H1 (cell line): ENCODE measurements at regions of chr16 and their contacts with region 1.

Region 1: DNA sequence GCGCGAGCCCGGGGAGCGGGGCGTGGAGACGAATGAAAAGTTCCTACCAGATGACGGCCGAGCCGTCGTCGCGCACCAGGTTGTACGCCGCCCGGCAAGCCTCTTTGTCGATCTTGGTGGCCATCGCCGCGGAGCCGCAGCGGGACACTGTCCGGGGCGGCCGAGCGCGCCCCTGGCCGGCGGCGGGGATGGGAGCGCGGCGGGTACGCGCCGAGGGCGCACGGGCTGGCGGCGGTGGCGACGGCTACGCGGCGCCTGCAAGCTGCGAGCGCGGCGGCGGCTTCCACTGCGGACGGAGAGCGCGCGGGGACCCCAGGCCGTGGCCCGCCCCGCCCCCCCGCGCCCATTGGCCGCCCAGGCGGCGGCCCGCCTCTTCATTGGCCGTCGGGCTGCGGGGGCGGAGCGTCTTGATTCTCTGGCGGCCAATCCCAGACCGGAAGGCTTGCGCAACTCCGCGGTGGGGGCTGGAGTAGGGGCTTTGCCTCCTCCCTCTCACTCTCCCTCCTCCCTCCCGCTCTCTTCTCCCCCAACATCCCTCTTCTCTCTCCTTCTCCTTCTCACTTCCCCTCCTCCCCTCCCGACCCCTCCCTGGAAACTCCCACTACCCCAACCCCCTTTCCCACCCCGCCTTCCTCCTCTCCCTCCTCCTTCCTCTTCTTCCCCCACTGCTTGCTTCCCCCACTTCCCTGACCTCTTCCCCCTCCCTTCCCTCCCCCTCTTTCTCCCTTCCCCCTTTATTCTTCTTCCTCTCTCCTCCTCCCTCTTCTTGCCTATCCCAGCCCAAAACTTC is at the start of gene COTL1:
- DNase-seq: peak; percentile 79 to 90
- H3K4me3 ChIP-seq: peak within 1 kb of the TSS; percentile 73 to 88 (median 78)
- H3K27ac ChIP-seq: peak within 1 kb of the TSS; percentile 56; the same call in 1 of the 2 replicates
- H3K4me1 ChIP-seq: peaks cover 6 to 21% (median 13%) of the 10 kb centered on the region in 4 experiments
- H3K27me3 ChIP-seq: peaks cover 0 to 5% (median 3%) of the 10 kb centered on the region in 4 experiments; a peak in 2 of 7 replicates
- CTCF ChIP-seq: no peak
- EP300 ChIP-seq: no peak
- POLR2A ChIP-seq: no peak; a peak in 1 of 3 replicates
- RAD21 ChIP-seq: no peak
- total RNA-seq, gene COTL1: 183 TPM in 2 replicates

Region 2: GRCh38 chr16:84413244-84414004 is 204.6 kb before region 1 on chr16:
- CTCF ChIA-PET with region 1: no interaction called
- POLR2A ChIA-PET with region 1: no interaction called
- DNase-seq: no peak
- H3K4me3 ChIP-seq: no peak overlapping the region
- H3K27ac ChIP-seq: no peak overlapping the region
- H3K4me1 ChIP-seq: no peaks in the 10 kb centered on the region; a peak in 2 of 7 replicates
- H3K27me3 ChIP-seq: no peaks in the 10 kb centered on the region
- CTCF ChIP-seq: no peak
- EP300 ChIP-seq: no peak
- POLR2A ChIP-seq: no peak
- RAD21 ChIP-seq: no peak

Region 3: DNA sequence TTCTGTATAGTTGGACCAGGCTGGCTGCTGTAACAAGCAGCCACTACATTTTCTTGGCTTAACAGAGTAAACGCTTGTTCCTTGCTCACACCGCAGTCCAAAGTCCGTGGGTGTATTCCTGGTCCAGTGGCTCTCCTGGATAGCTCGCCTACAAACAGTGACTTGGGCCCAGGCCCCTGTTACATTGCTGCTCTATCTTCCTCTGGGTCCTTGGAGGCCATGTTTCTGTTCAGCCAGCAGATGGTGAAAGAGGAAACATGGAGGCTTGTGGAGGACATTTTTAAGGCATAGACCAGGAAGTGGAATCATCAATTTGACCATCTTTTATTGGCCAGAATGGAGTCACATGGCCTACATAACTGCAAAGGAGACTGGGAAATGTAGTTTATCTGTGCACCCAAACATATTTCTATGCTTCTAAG is 194.6 kb before region 1 on chr16:
- CTCF ChIA-PET with region 1: no interaction called
- POLR2A ChIA-PET with region 1: no interaction called
- DNase-seq: no peak
- H3K4me3 ChIP-seq: no peak overlapping the region
- H3K27ac ChIP-seq: no peak overlapping the region
- H3K4me1 ChIP-seq: no peaks in the 10 kb centered on the region
- H3K27me3 ChIP-seq: peaks cover 0 to 2% (median under 1%) of the 10 kb centered on the region in 4 experiments; a peak in 2 of 7 replicates
- CTCF ChIP-seq: no peak
- EP300 ChIP-seq: no peak
- POLR2A ChIP-seq: no peak
- RAD21 ChIP-seq: no peak

Region 4: GRCh38 chr16:84448504-84448903 is 169.5 kb before region 1 on chr16:
- CTCF ChIA-PET with region 1: no interaction called
- POLR2A ChIA-PET with region 1: no interaction called
- DNase-seq: no peak
- H3K4me3 ChIP-seq: no peak overlapping the region
- H3K27ac ChIP-seq: no peak overlapping the region
- H3K4me1 ChIP-seq: no peaks in the 10 kb centered on the region; a peak in 1 of 7 replicates
- H3K27me3 ChIP-seq: no peaks in the 10 kb centered on the region
- CTCF ChIP-seq: no peak
- EP300 ChIP-seq: no peak
- POLR2A ChIP-seq: no peak
- RAD21 ChIP-seq: no peak

Region 5: DNA sequence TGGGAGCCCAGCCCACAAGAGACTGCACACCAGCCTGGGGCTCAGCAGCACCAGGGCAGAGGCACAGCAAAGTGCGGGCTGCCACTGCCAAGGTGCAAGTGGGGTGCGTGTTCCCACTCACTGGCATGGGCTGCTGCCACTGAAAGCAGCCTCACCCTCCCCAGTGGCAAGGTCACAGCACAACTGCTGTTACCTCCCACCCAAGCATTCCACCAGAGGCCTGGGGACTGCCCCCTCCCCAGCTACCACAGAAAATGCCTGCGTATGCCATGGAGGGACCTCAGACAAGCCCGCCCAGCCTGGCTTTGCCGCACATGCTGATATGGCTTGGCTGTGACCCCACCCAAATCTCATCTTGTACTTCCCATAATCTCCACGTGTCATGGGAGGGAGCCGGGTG is 146.7 kb before region 1 on chr16:
- CTCF ChIA-PET with region 1: no interaction called
- POLR2A ChIA-PET with region 1: no interaction called
- DNase-seq: no peak
- H3K4me3 ChIP-seq: no peak overlapping the region
- H3K27ac ChIP-seq: no peak overlapping the region
- H3K4me1 ChIP-seq: no peaks in the 10 kb centered on the region
- H3K27me3 ChIP-seq: no peaks in the 10 kb centered on the region
- CTCF ChIP-seq: no peak
- EP300 ChIP-seq: no peak
- POLR2A ChIP-seq: no peak
- RAD21 ChIP-seq: no peak

Region 6: DNA sequence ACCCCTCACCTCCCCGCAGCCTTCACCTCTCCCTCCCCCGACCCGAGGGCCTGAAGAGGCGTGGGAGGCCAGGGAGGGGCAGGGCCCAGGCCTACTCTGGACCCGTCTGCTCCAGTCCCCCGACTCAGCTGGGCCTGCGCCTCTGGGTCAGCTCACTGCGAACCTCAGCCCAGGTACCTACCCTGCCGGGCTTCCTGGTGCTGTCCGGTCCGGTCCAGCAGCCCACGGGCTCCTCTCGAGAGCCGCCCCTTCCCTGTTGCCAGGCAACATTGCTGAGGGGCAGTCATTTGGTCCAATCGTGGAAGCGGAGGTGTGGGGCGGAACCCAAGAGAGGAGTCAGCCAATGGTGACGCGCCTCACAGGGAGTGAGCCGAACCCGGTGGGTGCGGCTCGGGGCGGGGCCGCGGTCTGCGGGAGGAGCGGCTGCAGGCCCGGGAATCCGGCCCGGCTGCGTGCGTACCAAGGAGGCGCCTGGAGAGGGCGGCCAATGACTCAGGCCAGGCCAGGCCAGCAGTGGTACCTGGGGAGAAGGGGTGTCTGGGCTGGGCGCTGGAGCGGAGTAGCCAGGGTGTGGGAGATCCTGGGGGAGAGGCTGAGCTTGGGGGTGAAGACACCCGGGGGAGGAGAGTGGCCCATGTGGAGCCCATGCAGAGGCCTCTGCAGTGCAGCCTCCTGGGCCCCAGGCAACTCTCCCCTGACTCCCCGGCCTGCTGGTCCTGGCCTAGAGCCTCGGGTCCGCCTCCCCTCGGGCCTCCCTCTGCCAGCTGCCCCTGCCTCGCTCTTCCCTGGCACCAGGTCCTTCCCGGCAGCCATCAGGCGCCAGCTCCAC is 113.4 kb before region 1 on chr16 and contains the start of gene MEAK7:
- CTCF ChIA-PET with region 1: interaction called, 43 read pairs
- POLR2A ChIA-PET with region 1: interaction called, 3 read pairs
- DNase-seq: peak; percentile 93 to 100
- H3K4me3 ChIP-seq: peak within 1 kb of the TSS; percentile 65 to 96 (median 93)
- H3K27ac ChIP-seq: peak within 1 kb of the TSS; percentile 44; the same call in 1 of the 2 replicates
- H3K4me1 ChIP-seq: peaks cover 0 to 18% (median 13%) of the 10 kb centered on the region in 4 experiments; a peak in 5 of 7 replicates
- H3K27me3 ChIP-seq: no peaks in the 10 kb centered on the region
- CTCF ChIP-seq: peak in 2 of 3 experiments; percentile 2 to 9; a peak in 2 of 4 replicates
- EP300 ChIP-seq: 0 out of 3 replicates have a peak, but pooled peaks of 1 of the 2 experiments have one; percentile 21
- POLR2A ChIP-seq: peak in 1 of 2 experiments; percentile 73; a peak in 2 of 3 replicates
- RAD21 ChIP-seq: no peak
- total RNA-seq, gene MEAK7: 19.0 and 19.6 TPM in 2 replicates

Region 7: DNA sequence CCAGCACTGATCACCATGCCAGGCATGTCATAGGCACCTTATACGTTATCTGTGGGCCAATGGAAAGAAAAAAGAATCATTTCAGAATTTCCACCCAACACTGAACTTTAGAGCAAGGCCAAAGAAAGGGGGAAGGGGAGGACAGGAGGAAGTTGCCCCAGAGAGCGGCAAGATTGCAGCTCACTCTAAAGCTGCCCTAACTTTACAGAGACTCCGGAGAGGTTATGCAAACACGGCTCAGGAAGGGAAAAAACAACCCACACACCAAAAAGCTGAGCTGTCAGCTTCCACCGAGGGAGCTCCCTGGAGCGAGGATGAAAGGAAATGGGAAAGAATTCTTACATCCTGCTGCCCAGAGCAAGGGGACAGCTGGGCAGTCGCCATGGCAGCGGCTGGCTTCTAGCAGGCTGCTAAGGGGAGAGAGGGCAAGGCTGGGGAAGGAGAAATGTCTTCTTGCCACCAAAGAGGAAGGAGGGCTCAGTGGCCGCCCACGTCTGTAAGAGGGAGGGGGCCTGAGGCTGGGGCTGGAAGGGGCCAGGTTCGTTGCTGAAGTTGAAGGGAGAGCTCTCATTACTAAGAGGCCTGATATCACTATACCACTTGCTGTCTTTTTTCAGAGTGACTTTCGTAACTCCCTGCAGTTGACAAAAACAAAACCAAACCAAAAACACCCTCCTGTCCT is 18.3 kb before region 1 on chr16:
- CTCF ChIA-PET with region 1: interaction called, 13 read pairs
- POLR2A ChIA-PET with region 1: interaction called, 11 read pairs
- DNase-seq: peak; percentile 50 to 79
- H3K4me3 ChIP-seq: peak overlapping the region in 2 of 4 experiments; percentile 14 to 36; a peak in 5 of 8 replicates
- H3K27ac ChIP-seq: no peak overlapping the region
- H3K4me1 ChIP-seq: peaks cover 4 to 37% (median 26%) of the 10 kb centered on the region in 4 experiments
- H3K27me3 ChIP-seq: peaks cover 0 to 4% (median 1%) of the 10 kb centered on the region in 4 experiments; a peak in 3 of 7 replicates
- CTCF ChIP-seq: no peak
- EP300 ChIP-seq: no peak
- POLR2A ChIP-seq: no peak
- RAD21 ChIP-seq: no peak

Region 8: DNA sequence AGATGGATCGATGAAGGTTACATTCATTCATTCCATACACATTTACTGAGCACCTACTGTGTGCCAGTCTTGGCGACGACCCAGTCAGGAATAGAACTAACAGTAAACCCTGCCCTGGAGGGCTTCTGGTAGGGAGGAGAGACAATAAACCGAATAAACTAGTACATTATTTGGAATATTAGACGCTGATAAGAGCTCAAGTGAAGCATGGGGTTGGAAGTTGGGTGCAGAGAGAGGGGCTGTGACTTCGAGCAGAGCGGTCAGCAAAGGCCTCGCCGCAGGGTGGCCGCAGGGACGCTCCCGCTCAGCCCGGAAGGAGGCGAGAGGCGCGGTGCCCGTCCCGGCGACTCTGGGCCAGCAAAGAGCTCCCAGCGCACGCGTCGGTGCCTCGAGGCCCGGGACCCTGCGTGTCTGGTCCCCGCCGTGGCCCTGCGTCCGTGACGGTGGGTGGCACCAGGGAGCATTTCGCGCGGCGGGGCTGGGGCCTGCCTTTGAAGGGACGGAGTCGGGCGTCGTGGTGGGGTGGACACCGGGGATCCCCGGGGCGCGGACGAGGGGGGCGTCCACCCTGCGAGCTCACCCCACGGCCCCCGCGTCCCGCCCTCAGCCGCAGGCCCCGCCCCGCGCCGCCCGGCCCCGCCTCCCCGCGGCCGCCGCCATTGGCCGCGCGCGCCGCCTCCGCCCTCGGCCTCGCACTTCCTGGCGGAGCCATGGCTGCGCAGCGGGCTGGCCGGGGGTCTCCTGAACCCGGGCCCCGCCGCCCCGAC is 30.0 kb after region 1 on chr16 and contains the start of gene KLHL36:
- CTCF ChIA-PET with region 1: interaction called, 27 read pairs
- POLR2A ChIA-PET with region 1: interaction called, 4 read pairs
- DNase-seq: peak in 1 of 2 experiments; percentile 69
- H3K4me3 ChIP-seq: peak within 1 kb of the TSS; percentile 55 to 71 (median 62)
- H3K27ac ChIP-seq: no peak within 1 kb of the TSS
- H3K4me1 ChIP-seq: peaks cover 0 to 4% (median 2%) of the 10 kb centered on the region in 4 experiments; a peak in 4 of 7 replicates
- H3K27me3 ChIP-seq: peaks cover 0 to 13% (median 9%) of the 10 kb centered on the region in 4 experiments; a peak in 4 of 7 replicates
- CTCF ChIP-seq: no peak
- EP300 ChIP-seq: no peak
- POLR2A ChIP-seq: no peak
- RAD21 ChIP-seq: no peak
- total RNA-seq, gene KLHL36: 33.6 and 35.3 TPM in 2 replicates

Region 9: DNA sequence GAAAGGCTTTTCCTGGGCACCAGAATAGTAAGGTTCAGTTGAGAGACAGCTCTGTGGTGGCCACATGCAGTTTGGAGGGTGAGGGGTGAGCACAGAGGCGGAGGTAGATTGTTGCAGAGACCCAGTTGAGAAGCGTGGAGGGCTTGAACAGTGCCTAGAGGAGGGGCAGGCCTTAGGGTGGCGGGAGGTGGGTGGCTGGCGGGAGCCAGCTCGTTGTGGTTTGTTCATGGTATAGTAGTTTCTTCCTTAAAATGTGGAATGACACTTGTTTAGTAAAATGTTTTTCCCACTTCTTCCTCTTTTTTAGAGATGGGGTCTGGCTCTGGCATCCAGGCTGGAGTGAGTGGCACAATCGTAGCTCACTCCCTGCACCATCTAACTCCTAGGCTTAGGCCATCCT is 96.0 kb after region 1 on chr16:
- CTCF ChIA-PET with region 1: interaction called, 18 read pairs
- POLR2A ChIA-PET with region 1: no interaction called
- DNase-seq: peak in 1 of 2 experiments; percentile 50
- H3K4me3 ChIP-seq: no peak overlapping the region
- H3K27ac ChIP-seq: no peak overlapping the region
- H3K4me1 ChIP-seq: peaks cover 2 to 24% (median 19%) of the 10 kb centered on the region in 4 experiments
- H3K27me3 ChIP-seq: no peaks in the 10 kb centered on the region
- CTCF ChIP-seq: no peak
- EP300 ChIP-seq: no peak
- POLR2A ChIP-seq: no peak
- RAD21 ChIP-seq: no peak

Region 10: DNA sequence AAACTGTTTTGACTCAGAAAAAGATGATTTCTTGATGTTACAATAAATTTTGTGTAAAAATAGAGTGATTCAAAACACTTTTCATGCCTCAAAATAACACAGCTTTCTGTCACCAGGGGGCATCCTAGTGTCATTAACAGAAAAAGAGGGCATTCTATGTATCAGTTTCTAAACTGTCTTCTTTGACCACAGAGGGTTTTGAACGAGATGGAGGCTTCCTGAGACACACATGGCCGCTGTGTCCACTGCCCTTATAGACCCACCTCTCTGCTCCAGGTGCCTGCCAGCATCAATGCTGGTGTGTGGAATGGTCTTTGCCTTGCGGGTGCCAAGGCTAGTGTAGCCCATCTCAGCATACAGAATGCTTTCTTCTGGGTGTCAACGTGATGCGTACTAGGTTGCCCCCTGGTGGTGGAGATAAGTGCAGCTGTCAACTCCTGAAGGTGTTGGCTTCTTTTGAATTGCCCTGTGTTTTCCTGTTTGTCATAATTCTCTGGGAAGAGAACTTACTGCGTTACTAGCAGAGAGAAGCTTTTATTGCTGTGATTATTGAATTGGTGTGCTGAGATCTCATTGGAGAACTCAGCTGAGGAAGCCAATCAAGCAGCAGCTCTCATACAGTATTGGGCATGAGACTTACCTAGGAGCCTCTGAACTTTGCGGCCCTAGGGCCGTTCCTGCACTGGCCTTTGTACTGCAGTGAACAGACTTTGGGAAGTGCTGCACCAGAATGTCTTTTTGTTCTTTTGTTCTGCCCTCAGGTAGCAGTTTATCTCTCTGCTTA is 120.5 kb after region 1 on chr16:
- CTCF ChIA-PET with region 1: interaction called, 68 read pairs
- POLR2A ChIA-PET with region 1: interaction called, 4 read pairs
- DNase-seq: peak in 1 of 2 experiments; percentile 91
- H3K4me3 ChIP-seq: no peak overlapping the region
- H3K27ac ChIP-seq: no peak overlapping the region
- H3K4me1 ChIP-seq: peaks cover 7 to 22% (median 16%) of the 10 kb centered on the region in 4 experiments
- H3K27me3 ChIP-seq: no peaks in the 10 kb centered on the region
- CTCF ChIP-seq: peak; percentile 85 to 91 (median 86)
- EP300 ChIP-seq: no peak
- POLR2A ChIP-seq: no peak
- RAD21 ChIP-seq: peak; percentile 43 to 64